GM12878 (cell line): ENCODE measurements at regions of chr14 and their contacts with region 1.

Region 1: GRCh38 chr14:56555921-56556570 is 23.6 kb upstream of the TMEM260 start:
- DNase-seq: no peak
- ATAC-seq: peak; percentile 59
- H3K4me3 ChIP-seq: no peak overlapping the region
- H3K27ac ChIP-seq: no peak overlapping the region
- H3K4me1 ChIP-seq: no peaks in the 10 kb centered on the region
- H3K27me3 ChIP-seq: 0 out of 4 replicates have a peak, but pooled peaks cover 0 to 2% of the 10 kb centered on the region in 2 experiments
- CTCF ChIP-seq: peak; percentile 48 to 63 (median 55); a peak in 5 of 6 replicates
- EP300 ChIP-seq: no peak
- POLR2A ChIP-seq: no peak
- RAD21 ChIP-seq: peak; percentile 63

Region 2: GRCh38 chr14:56862836-56863235 is 306.8 kb after region 1 on chr14:
- CTCF ChIA-PET with region 1: no interaction called
- POLR2A ChIA-PET with region 1: no interaction called
- RAD21 ChIA-PET with region 1: no interaction called
- SMC1A ChIA-PET with region 1: no interaction called
- in situ Hi-C with region 1: no loop called
- intact Hi-C with region 1: loop called (anchors 10 kb)
- DNase-seq: no peak
- ATAC-seq: no peak
- H3K4me3 ChIP-seq: no peak overlapping the region
- H3K27ac ChIP-seq: no peak overlapping the region
- H3K4me1 ChIP-seq: no peaks in the 10 kb centered on the region
- H3K27me3 ChIP-seq: no peaks in the 10 kb centered on the region
- CTCF ChIP-seq: no peak
- EP300 ChIP-seq: no peak
- POLR2A ChIP-seq: no peak
- RAD21 ChIP-seq: no peak

Region 3: DNA sequence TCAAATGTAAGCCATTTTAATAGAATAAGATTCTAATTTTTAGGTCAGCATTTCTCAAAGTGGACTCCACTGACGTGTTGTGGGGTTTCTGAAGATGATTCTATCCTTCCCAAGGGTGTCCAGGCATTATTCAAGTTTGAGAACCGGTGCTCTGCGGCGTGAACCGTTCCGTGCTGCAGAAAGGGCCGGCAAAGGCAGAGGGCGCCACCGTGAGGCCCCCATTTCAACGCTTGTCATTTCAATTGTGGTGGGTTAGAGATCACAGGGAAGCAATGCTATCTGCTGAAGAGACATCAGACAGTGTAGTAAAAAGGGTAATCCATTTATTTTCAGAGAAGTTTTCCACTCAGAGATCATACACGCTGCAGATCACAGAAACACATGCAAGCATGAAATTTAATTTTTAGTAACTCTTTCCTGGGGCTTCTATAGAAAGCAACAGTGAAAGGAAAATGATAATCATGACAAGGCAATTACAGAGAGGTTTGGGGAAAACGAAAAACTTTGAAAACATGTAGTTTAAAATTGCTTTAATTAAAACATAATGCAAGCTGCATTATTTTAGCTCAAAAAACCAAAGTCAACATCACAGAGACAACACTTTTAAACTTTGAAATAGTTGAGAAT is 511.0 kb after region 1 on chr14:
- CTCF ChIA-PET with region 1: no interaction called
- POLR2A ChIA-PET with region 1: no interaction called
- RAD21 ChIA-PET with region 1: no interaction called
- SMC1A ChIA-PET with region 1: interaction called, 3 read pairs
- in situ Hi-C with region 1: loop called (anchors 10 kb)
- intact Hi-C with region 1: loop called (anchors 10 kb)
- DNase-seq: no peak
- ATAC-seq: peak; percentile 89
- H3K4me3 ChIP-seq: no peak overlapping the region
- H3K27ac ChIP-seq: no peak overlapping the region
- H3K4me1 ChIP-seq: no peaks in the 10 kb centered on the region
- H3K27me3 ChIP-seq: peaks cover 0 to 7% of the 10 kb centered on the region in 2 experiments; a peak in 1 of 4 replicates
- CTCF ChIP-seq: peak; percentile 67 to 77 (median 69)
- EP300 ChIP-seq: no peak
- POLR2A ChIP-seq: no peak
- RAD21 ChIP-seq: peak; percentile 79

Region 4: DNA sequence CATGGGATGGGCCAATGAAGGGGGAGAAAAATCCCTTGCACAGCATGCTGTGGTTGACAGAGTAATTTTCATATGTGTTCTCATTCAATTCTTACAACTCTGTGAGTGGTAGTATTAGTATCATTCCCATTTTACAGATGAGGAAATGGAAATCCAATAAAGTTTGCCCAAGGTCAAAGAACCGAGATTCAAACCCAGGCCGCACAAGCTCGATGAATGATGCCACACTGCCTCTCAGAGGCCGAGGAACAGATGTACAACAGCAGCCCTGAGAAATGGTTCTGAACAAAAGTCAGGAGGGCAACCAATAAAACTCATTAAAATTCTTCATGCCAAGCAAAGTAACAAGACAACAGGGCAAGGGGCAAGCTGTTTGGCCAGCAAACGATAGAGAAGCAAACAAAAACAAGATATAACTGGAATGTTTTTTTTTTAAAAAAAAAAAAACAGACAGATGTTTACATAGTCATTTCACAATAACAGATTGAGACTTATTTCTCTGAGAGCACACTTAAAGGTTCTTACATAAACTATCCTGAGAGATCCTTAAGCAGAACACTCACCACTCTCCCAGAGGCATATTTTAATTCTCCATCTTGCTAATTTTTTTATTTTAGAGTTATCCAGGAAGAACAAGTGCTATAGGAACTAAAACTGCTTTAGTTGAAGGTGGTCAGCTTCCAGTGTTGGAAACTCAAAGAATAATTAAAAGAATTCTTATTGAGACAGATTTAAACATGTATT is 626.9 kb after region 1 on chr14:
- CTCF ChIA-PET with region 1: no interaction called
- POLR2A ChIA-PET with region 1: no interaction called
- RAD21 ChIA-PET with region 1: no interaction called
- SMC1A ChIA-PET with region 1: no interaction called
- in situ Hi-C with region 1: no loop called
- intact Hi-C with region 1: loop called (anchors 10 kb)
- DNase-seq: no peak
- ATAC-seq: peak; percentile 54; the same call in 2 of the 3 replicates
- H3K4me3 ChIP-seq: no peak overlapping the region
- H3K27ac ChIP-seq: no peak overlapping the region
- H3K4me1 ChIP-seq: no peaks in the 10 kb centered on the region
- H3K27me3 ChIP-seq: no peaks in the 10 kb centered on the region; a peak in 1 of 4 replicates
- CTCF ChIP-seq: peak; percentile 43 to 45 (median 44); a peak in 5 of 6 replicates
- EP300 ChIP-seq: no peak
- POLR2A ChIP-seq: no peak
- RAD21 ChIP-seq: peak; percentile 69